ENCODE measurements at regions of chr19 and their contacts with region 1.

Region 1: GRCh38 chr19:45717166-45717982 is 13.3 kb downstream of the FBXO46 start:
- DNase-seq: peak; percentile 99
- H3K4me3 Mint-ChIP-seq: peak overlapping the region; percentile 94
- H3K27ac Mint-ChIP-seq: peak overlapping the region; percentile 94
- H3K4me1 Mint-ChIP-seq: peaks cover 27% of the 10 kb centered on the region
- H3K27me3 Mint-ChIP-seq: no peaks in the 10 kb centered on the region

Region 2: GRCh38 chr19:45730389-45731288 is 13.3 kb after region 1 on chr19 and contains the start of gene FBXO46:
- intact Hi-C with region 1: loop called (anchors 1 kb)
- DNase-seq: peak; percentile 93
- H3K4me3 Mint-ChIP-seq: peak within 1 kb of the TSS; percentile 100
- H3K27ac Mint-ChIP-seq: peak within 1 kb of the TSS; percentile 92
- H3K4me1 Mint-ChIP-seq: peaks cover 18% of the 10 kb centered on the region
- H3K27me3 Mint-ChIP-seq: no peaks in the 10 kb centered on the region
- total RNA-seq, gene FBXO46: 34.4 and 38.9 TPM in 2 replicates

Measured in activated T-helper 2 cell treated with anti-CD3 and anti-CD28 coated beads, Interferon-gamma antibody, Interleukin-2, Interleukin-4, amounts not matched to agents 10 μg/mL and 5 μg/mL and 100 μg/mL, durations not matched to agents 14 hours and 24 hours and 36 hours (primary cell).